PC-9 (cell line): ENCODE measurements at regions of chr6 and their contacts with region 1.

Region 1: GRCh38 chr6:41941280-41942066 is at the start of gene CCND3:
- DNase-seq: peak; percentile 69 to 89
- H3K4me3 ChIP-seq: peak within 1 kb of the TSS; percentile 78
- H3K27ac ChIP-seq: peak within 1 kb of the TSS; percentile 72
- H3K4me1 ChIP-seq: peaks cover 27% of the 10 kb centered on the region
- H3K27me3 ChIP-seq: no peaks in the 10 kb centered on the region
- CTCF ChIP-seq: no peak
- total RNA-seq, gene CCND3: 70.5 and 75.1 TPM in 2 replicates

Region 2: GRCh38 chr6:41818271-41819054 is 123.0 kb before region 1 on chr6:
- CTCF ChIA-PET with region 1: no interaction called
- POLR2A ChIA-PET with region 1: interaction called, 19 read pairs
- intact Hi-C with region 1: no loop called
- DNase-seq: no peak
- H3K4me3 ChIP-seq: no peak overlapping the region
- H3K27ac ChIP-seq: no peak overlapping the region
- H3K4me1 ChIP-seq: no peaks in the 10 kb centered on the region
- H3K27me3 ChIP-seq: no peaks in the 10 kb centered on the region
- CTCF ChIP-seq: no peak

Region 3: DNA sequence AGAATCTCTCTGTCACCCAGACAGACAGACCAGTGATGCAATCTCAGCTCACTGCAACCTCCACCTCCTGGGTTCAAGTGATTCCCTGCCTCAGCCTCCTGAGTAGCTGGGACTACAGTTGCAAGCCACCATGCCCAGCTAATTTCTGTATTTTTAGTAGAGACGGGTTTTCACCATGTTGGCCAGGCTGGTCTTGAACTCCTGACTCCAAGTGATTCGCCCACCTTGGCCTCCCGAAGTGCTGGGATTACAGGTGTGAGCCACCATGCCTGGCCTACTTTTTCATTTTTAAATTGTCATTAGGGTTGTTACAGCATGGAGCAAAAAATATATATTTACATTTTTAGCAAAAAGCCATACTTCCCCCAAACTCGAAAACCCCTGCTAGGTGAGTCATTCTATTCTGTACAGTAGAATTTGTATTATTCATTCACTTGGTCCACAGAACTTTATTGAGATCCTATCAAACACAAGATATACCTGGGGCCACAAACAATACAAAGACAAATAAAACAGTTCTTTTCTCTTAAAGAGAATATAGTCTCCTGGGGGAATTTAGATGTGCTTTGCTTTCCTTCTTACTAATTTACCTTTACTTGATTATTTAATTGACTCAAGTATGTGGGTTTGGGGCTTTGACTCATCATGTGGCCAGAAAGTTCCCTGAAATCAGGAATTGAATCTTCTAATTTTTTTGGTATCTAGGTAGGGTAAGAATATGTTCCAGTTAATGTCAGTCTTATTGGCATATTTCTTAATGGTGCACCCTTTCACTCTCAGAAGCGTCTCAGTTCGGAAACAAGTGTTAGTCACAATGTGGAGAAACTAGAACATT is 16.8 kb after region 1 on chr6:
- CTCF ChIA-PET with region 1: interaction called, 4 read pairs
- POLR2A ChIA-PET with region 1: interaction called, 14 read pairs
- intact Hi-C with region 1: no loop called
- DNase-seq: no peak
- H3K4me3 ChIP-seq: no peak overlapping the region
- H3K27ac ChIP-seq: no peak overlapping the region
- H3K4me1 ChIP-seq: peaks cover 12% of the 10 kb centered on the region
- H3K27me3 ChIP-seq: no peaks in the 10 kb centered on the region
- CTCF ChIP-seq: no peak

Region 4: DNA sequence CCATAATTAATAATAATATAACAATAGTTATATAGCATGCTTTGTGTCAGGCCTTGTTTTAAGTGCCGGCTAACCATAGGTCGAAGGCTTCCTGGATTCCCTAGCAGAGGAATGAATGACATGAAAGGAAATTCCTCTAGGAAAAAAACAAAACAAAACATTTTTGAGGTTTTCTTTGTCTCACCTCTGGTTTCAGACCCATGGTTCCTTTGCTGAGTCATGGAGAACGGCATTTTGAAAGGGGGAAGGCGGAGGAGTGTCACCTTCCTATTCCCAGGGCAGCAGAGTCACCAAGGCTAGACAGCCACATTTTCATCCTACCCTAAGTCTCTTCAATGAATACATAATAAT is 25.5 kb after region 1 on chr6:
- CTCF ChIA-PET with region 1: interaction called, 5 read pairs
- POLR2A ChIA-PET with region 1: interaction called, 6 read pairs
- intact Hi-C with region 1: loop called (anchors 1 kb)
- DNase-seq: peak; percentile 74 to 88
- H3K4me3 ChIP-seq: no peak overlapping the region; the same call in 1 of the 2 replicates
- H3K27ac ChIP-seq: peak overlapping the region; percentile 98
- H3K4me1 ChIP-seq: peaks cover 44% of the 10 kb centered on the region
- H3K27me3 ChIP-seq: no peaks in the 10 kb centered on the region
- CTCF ChIP-seq: no peak

Region 5: GRCh38 chr6:43096451-43097097 is 1155.1 kb after region 1 on chr6:
- CTCF ChIA-PET with region 1: interaction called, 16 read pairs
- POLR2A ChIA-PET with region 1: no interaction called
- intact Hi-C with region 1: no loop called
- DNase-seq: peak; percentile 89 to 98
- H3K4me3 ChIP-seq: peak overlapping the region; percentile 47; the same call in 1 of the 2 replicates
- H3K27ac ChIP-seq: peak overlapping the region; percentile 89
- H3K4me1 ChIP-seq: peaks cover 60% of the 10 kb centered on the region
- H3K27me3 ChIP-seq: no peaks in the 10 kb centered on the region
- CTCF ChIP-seq: no peak; the same call in 1 of the 2 replicates